CD4-positive, alpha-beta memory T cell (primary cell): ENCODE measurements at regions of chr2 and their contacts with region 1.

Region 1: DNA sequence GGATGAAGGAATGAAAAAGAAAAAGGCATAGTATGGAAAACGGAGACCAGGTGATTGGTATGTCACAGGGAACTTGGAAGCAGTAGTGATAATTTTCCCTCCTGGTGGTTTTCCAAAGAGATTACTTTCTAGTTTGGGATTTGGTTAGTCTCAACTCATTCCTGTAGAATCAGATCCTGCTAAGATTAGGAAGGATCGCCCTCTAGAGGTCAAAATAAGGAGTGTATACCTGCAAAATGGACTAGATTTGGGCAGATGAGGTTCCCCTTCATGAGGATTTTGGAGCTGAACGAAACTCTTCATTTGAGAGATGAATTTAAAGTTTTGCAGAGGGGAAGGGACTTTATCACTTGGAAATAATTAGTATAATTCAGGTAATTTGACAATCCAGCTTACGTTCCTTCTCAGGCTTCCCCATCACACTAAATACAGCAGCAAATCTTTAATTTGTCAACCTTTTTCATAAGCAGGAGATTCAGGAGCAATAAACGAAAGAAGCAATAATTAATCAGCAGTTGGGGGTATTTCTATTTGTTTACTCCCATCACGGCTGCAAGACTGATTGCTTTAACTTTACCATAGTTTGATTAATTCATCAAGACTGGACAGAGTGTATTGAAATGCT is 65.2 kb downstream of the CCDC195 start:
- DNase-seq: peak in 4 of 5 donors; percentile 49 to 51 (median 50)
- H3K4me3 ChIP-seq: no peak overlapping the region
- H3K4me3 Mint-ChIP-seq: no peak overlapping the region
- H3K27ac ChIP-seq: no peak overlapping the region
- H3K27ac Mint-ChIP-seq: peak overlapping the region in 1 of 7 donors; percentile 4
- H3K4me1 ChIP-seq: no peaks in the 10 kb centered on the region
- H3K4me1 Mint-ChIP-seq: peaks cover 0 to 3% (median under 1%) of the 10 kb centered on the region in 4 donors
- H3K27me3 ChIP-seq: no peaks in the 10 kb centered on the region
- H3K27me3 Mint-ChIP-seq: peaks cover 3 to 9% of the 10 kb centered on the region in 2 donors

Region 2: DNA sequence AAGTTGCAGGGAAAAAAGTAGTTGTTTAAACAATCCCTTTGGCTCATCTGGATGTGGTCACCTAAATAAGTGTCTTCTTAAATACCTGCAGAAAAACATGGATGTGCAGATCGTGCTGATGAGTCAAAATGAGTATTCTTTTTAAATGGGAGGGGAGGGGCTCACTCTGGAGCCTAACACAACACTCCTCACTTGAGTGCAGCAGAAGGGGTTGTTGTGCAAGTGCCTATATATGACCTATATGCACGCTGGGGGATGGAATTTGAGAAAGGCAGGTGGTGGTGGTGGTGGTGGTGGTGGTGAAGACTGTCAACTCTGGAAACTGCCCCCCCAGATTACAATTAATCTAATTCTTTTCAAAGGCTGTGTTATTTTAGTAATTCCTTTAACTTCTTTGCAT is 171.1 kb before region 1 on chr2:
- CTCF ChIA-PET with region 1: interaction called, 3 read pairs
- POLR2A ChIA-PET with region 1: no interaction called
- intact Hi-C with region 1: loop called (anchors 10 kb)
- DNase-seq: no peak
- H3K4me3 ChIP-seq: no peak overlapping the region
- H3K4me3 Mint-ChIP-seq: no peak overlapping the region
- H3K27ac ChIP-seq: no peak overlapping the region
- H3K27ac Mint-ChIP-seq: peak overlapping the region in 2 of 7 donors; percentile 2 to 62
- H3K4me1 ChIP-seq: no peaks in the 10 kb centered on the region
- H3K4me1 Mint-ChIP-seq: peaks cover 0 to 6% (median 2%) of the 10 kb centered on the region in 4 donors
- H3K27me3 ChIP-seq: no peaks in the 10 kb centered on the region
- H3K27me3 Mint-ChIP-seq: no peaks in the 10 kb centered on the region

Region 3: DNA sequence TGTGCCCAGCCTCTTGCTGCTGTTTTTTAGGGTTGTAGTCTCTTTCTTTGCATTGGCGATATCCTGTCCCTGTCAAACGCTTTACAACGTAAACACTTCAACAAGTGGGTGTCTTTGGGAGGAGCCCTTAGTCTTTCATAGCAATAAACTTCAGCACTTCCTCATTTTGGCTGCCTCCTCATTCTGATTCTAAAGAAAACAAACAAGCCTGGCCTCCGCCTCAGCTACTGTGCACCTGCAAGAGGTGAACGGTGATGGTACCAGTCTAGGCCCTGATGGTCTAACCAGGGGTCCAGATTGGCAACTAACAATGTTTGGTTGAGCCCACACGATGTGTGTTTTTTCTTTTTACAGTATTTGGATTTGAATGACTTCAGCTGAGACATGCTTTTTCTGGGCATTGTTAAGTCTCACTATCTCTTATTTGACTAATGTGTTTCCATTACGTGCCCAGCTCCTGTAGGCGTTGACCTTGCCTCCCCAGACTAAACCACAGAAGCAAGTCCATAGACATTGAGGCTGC is 12.6 kb before region 1 on chr2:
- CTCF ChIA-PET with region 1: interaction called, 22 read pairs
- POLR2A ChIA-PET with region 1: no interaction called
- intact Hi-C with region 1: no loop called
- DNase-seq: peak in 4 of 5 donors; percentile 18 to 46 (median 32)
- H3K4me3 ChIP-seq: no peak overlapping the region
- H3K4me3 Mint-ChIP-seq: peak overlapping the region in 7 of 8 donors; percentile 7 to 76 (median 41)
- H3K27ac ChIP-seq: peak overlapping the region; percentile 10
- H3K27ac Mint-ChIP-seq: peak overlapping the region in 6 of 7 donors; percentile 81 to 90 (median 88)
- H3K4me1 ChIP-seq: peaks cover 13% of the 10 kb centered on the region
- H3K4me1 Mint-ChIP-seq: peaks cover 9 to 15% (median 10%) of the 10 kb centered on the region in 4 donors
- H3K27me3 ChIP-seq: no peaks in the 10 kb centered on the region
- H3K27me3 Mint-ChIP-seq: peaks cover 0 to 3% of the 10 kb centered on the region in 2 donors

Region 4: GRCh38 chr2:224724331-224724730 is 73.4 kb after region 1 on chr2:
- CTCF ChIA-PET with region 1: no interaction called
- POLR2A ChIA-PET with region 1: no interaction called
- intact Hi-C with region 1: no loop called
- DNase-seq: no peak
- H3K4me3 ChIP-seq: no peak overlapping the region
- H3K4me3 Mint-ChIP-seq: no peak overlapping the region
- H3K27ac ChIP-seq: no peak overlapping the region
- H3K27ac Mint-ChIP-seq: no peak overlapping the region
- H3K4me1 ChIP-seq: no peaks in the 10 kb centered on the region
- H3K4me1 Mint-ChIP-seq: no peaks in the 10 kb centered on the region
- H3K27me3 ChIP-seq: no peaks in the 10 kb centered on the region
- H3K27me3 Mint-ChIP-seq: peaks cover 9 to 11% of the 10 kb centered on the region in 2 donors

Region 5: DNA sequence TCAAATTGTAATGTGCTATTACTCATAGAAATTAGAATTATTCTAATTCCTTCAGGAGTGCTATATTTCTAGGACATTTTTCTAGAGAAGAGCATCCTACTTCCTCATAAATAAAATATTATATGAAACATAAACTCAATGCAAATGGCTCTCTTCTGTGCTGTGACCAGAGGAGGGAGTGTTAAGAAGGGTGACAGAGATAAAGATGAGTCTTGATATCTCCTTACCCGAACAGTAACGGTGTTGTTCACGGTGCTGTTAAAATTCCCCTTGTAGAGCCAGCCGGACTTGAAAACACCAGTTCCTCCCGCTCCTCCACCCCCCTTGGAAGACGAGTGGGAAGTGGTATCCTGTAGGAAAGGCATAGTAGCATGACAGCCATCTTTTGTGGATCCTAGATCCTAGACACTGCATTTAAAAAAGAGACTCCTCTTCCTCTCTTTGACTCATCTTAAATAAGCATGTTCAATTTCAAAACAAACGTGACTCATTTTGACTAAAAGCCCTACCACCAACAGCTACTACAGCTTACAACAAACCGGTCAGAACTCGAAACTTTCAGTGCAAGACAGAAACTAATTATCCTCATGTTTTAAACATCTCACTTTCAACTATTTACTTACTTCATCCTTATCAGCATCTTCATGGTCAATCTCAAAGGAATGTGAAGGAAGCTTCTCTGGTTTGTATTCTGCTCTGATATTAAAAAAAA is 235.1 kb after region 1 on chr2:
- CTCF ChIA-PET with region 1: no interaction called
- POLR2A ChIA-PET with region 1: no interaction called
- intact Hi-C with region 1: no loop called
- DNase-seq: no peak
- H3K4me3 ChIP-seq: no peak overlapping the region
- H3K4me3 Mint-ChIP-seq: peak overlapping the region in 1 of 8 donors; percentile 7
- H3K27ac ChIP-seq: peak overlapping the region; percentile 9
- H3K27ac Mint-ChIP-seq: peak overlapping the region; percentile 57 to 81 (median 67)
- H3K4me1 ChIP-seq: peaks cover 29% of the 10 kb centered on the region
- H3K4me1 Mint-ChIP-seq: peaks cover 45 to 72% (median 53%) of the 10 kb centered on the region in 4 donors
- H3K27me3 ChIP-seq: no peaks in the 10 kb centered on the region
- H3K27me3 Mint-ChIP-seq: no peaks in the 10 kb centered on the region